ENCODE measurements at regions of chr2 and their contacts with region 1.

Region 1: DNA sequence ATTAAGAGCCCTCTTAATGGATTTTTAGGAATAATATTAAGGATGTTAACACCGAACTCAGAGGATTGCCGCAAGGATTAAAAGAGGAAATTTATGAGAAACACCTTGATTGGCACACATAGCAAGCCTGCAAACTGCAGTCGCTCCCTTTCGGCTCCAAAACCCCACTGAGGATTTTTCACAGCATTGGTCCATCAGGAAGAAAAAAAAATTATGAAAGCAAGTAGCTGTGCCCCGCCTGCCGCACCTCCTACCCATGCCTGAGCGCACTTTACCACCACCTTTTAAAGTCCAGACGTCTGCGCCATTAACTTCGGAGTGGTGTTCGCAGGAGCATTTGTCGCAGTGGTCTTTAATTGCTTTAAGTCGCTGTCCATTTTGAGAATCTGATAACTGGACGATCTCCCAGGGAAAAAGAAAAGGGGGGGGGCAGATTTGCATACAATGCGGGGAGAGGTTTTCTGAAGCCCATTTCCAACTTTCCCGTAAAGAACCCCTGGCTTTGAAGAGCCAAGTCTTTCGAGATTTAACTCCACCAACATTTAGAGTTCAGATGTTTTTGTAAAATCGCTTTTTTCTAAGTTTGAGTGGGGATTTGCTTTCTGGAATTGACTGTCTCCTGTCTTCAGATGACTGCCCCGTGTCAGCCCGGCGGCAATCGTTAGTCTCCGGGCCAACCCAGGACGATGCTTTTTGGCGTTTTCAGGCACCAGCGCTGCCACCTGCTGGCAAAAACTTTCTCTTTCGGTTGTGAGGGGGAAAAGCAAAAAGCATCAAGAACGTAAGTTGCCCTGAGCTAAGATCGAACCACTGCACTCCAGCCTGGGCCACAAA is 914 bp upstream of the TRABD2A start:
- DNase-seq: peak; percentile 94
- ATAC-seq: peak; percentile 71
- H3K4me3 Mint-ChIP-seq: peak overlapping the region; percentile 83
- H3K27ac Mint-ChIP-seq: peak overlapping the region; percentile 88
- H3K4me1 Mint-ChIP-seq: peaks cover 66% of the 10 kb centered on the region
- H3K27me3 Mint-ChIP-seq: no peaks in the 10 kb centered on the region

Region 2: DNA sequence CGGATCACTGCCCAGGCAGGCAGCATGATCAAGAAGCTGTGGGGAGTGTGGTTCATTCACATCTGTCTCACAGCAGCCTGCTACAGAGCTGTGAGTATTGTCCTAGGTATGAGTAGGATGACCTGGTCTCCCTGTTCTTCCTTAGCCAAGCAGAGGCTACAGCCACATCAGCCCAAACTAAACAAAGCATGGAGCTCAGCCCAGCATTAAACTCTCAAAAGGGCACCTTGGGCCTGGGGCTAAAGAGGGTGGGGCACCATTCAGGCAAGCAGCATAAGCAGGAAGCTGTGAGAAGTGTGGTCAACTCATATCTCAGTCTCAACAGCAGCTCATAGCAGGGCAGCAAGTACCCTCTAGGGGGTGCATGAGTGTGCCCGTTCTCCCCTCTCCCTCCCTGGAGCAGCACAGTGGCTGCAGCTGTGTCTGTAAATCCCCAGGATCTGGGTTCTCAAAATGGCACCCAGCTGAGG is 140.5 kb before region 1 on chr2:
- CTCF ChIA-PET with region 1: interaction called, 11 read pairs
- POLR2A ChIA-PET with region 1: interaction called, 4 read pairs
- DNase-seq: peak; percentile 75
- ATAC-seq: peak; percentile 99
- H3K4me3 Mint-ChIP-seq: no peak overlapping the region
- H3K27ac Mint-ChIP-seq: peak overlapping the region; percentile 85
- H3K4me1 Mint-ChIP-seq: peaks cover 15% of the 10 kb centered on the region
- H3K27me3 Mint-ChIP-seq: no peaks in the 10 kb centered on the region

Region 3: DNA sequence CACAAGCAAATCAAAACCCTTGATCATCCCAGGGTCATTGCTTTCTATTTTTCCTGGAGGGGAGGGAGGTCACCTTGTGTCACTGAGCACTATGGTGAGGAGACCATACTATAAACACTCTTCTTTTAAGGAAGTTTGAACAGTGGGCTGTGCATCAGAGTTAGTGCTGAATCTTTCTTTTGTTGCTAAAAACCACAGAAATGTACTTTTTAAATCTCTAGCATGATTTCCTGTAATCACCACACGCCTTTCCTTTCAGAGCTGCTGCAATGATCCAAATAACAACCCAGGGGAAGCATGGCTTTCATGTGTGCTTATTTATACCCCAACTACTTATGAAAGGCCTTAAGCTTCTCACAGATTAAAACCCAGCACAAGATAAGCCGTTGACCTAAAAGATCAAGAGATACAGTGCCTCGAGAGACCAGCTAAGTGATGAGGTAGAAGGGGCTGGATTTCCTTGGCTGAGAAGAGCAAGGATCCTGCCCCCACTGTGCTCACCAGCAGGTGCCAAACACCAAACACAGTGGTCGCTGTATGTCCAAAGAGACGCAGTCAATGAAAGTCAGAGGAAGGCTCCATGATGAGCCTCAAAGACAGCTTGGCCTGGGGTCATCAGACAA is 35.6 kb before region 1 on chr2:
- CTCF ChIA-PET with region 1: interaction called, 18 read pairs
- POLR2A ChIA-PET with region 1: interaction called, 6 read pairs
- DNase-seq: peak; percentile 72
- ATAC-seq: peak; percentile 75
- H3K4me3 Mint-ChIP-seq: peak overlapping the region; percentile 38
- H3K27ac Mint-ChIP-seq: peak overlapping the region; percentile 96
- H3K4me1 Mint-ChIP-seq: peaks cover 92% of the 10 kb centered on the region
- H3K27me3 Mint-ChIP-seq: no peaks in the 10 kb centered on the region

Region 4: GRCh38 chr2:84865181-84865783 is 16.5 kb before region 1 on chr2:
- CTCF ChIA-PET with region 1: interaction called, 15 read pairs
- POLR2A ChIA-PET with region 1: interaction called, 4 read pairs
- DNase-seq: peak; percentile 27
- ATAC-seq: peak; percentile 61
- H3K4me3 Mint-ChIP-seq: no peak overlapping the region
- H3K27ac Mint-ChIP-seq: peak overlapping the region; percentile 75
- H3K4me1 Mint-ChIP-seq: peaks cover 82% of the 10 kb centered on the region
- H3K27me3 Mint-ChIP-seq: no peaks in the 10 kb centered on the region

Region 5: DNA sequence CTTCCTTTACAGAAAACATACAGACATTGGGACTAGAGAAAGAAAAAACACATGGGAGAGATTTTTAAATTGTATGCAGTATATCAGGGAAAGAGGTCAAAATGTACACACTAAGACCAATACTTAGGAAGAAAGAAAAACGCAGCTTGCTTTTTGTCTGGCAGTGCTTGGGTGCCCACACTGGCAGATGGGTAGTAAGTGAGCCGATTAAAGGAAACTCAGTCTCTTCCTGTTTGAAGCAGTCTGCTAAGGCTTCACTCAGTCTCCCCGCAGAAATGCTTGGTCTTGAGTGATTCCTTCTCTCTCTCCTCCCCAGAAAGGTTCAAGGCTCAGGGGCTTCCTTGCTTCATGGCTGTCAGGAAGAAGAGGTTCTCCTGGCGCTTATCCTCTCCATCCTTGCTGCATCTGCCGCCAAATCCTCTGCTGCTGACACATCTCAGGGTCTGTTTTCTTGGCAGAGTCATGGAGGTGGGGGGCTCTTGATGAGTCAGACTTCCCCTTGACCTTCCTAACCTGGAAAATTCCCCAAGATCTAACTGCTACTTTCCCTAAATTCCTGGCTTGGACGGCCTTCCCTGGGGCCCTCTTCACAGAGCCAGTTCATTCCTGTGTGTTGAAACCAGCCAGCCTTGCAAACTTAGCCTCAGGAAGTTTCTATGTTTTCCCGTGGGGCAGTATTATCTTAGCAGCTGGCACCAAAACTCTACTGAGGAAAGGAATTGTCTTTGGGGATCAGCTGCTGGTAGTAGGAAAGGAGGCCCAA is 13.1 kb after region 1 on chr2:
- CTCF ChIA-PET with region 1: interaction called, 58 read pairs
- POLR2A ChIA-PET with region 1: interaction called, 19 read pairs
- DNase-seq: peak; percentile 46
- ATAC-seq: peak; percentile 65
- H3K4me3 Mint-ChIP-seq: peak overlapping the region; percentile 43
- H3K27ac Mint-ChIP-seq: peak overlapping the region; percentile 69
- H3K4me1 Mint-ChIP-seq: peaks cover 71% of the 10 kb centered on the region
- H3K27me3 Mint-ChIP-seq: no peaks in the 10 kb centered on the region

Measured in activated CD8-positive, alpha-beta T cell treated with anti-CD3 and anti-CD28 coated beads, Interleukin-2, amount 10 ng/mL, durations not matched to agents 7 days and 5 days (primary cell).